WTC11 (cell line): ENCODE measurements at regions of chr15 and their contacts with region 1.

Region 1: GRCh38 chr15:27059610-27060202 is 88.7 kb downstream of the GABRG3 start:
- DNase-seq: peak; percentile 72
- ATAC-seq: peak; percentile 95
- H3K4me3 Mint-ChIP-seq: no peak overlapping the region
- H3K27ac Mint-ChIP-seq: no peak overlapping the region
- H3K4me1 Mint-ChIP-seq: no peaks in the 10 kb centered on the region
- H3K27me3 Mint-ChIP-seq: no peaks in the 10 kb centered on the region
- CTCF ChIP-seq: peak; percentile 59; the same call in 1 of the 2 replicates

Region 2: DNA sequence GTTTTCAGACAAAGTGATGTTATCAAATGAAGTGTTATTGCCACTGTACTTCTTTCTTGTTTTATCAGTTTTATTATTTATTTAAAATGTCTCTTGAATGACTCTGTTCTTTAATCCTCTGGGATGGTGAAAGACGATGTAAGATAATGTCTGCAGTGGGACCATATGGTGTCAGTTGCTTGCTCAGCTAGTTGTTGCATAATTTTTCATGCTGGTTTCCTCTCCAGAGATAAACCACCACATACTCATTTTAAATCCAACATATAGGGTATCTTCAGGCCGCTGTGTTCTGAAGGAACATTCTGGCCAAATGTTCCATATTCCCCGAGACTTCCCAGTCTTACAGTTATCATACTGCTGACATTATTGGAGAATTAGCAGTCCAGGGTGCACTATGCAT is 12.8 kb before region 1 on chr15:
- CTCF ChIA-PET with region 1: interaction called, 27 read pairs
- POLR2A ChIA-PET with region 1: no interaction called
- DNase-seq: no peak
- ATAC-seq: no peak
- H3K4me3 Mint-ChIP-seq: no peak overlapping the region
- H3K27ac Mint-ChIP-seq: no peak overlapping the region
- H3K4me1 Mint-ChIP-seq: no peaks in the 10 kb centered on the region
- H3K27me3 Mint-ChIP-seq: no peaks in the 10 kb centered on the region
- CTCF ChIP-seq: no peak

Region 3: GRCh38 chr15:27070841-27071240 is 11.1 kb after region 1 on chr15:
- CTCF ChIA-PET with region 1: interaction called, 35 read pairs
- POLR2A ChIA-PET with region 1: no interaction called
- DNase-seq: no peak
- ATAC-seq: peak; percentile 48
- H3K4me3 Mint-ChIP-seq: no peak overlapping the region
- H3K27ac Mint-ChIP-seq: no peak overlapping the region
- H3K4me1 Mint-ChIP-seq: peaks cover 19% of the 10 kb centered on the region
- H3K27me3 Mint-ChIP-seq: no peaks in the 10 kb centered on the region
- CTCF ChIP-seq: no peak

Region 4: GRCh38 chr15:27082526-27082925 is 22.8 kb after region 1 on chr15:
- CTCF ChIA-PET with region 1: interaction called, 12 read pairs
- POLR2A ChIA-PET with region 1: no interaction called
- DNase-seq: no peak
- ATAC-seq: no peak
- H3K4me3 Mint-ChIP-seq: no peak overlapping the region
- H3K27ac Mint-ChIP-seq: no peak overlapping the region
- H3K4me1 Mint-ChIP-seq: peaks cover 15% of the 10 kb centered on the region
- H3K27me3 Mint-ChIP-seq: no peaks in the 10 kb centered on the region
- CTCF ChIP-seq: no peak

Region 5: DNA sequence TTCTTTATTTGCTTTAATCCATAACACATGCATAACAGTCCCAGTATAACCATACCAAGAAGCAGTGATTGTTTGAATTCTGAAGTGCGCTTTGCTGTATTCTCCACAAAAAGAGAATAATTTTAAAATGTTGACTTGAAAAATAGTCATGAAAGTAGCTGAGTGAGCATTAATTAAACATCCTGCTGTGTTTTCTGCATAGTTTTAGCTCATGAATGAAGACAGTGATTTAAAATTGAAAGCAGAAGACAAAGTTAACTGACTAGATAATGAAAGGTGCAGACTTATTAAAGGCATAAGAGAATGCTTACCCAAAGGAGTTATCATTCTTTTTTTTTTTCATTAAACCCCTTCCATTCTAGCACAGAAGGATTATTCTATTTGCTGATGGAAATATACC is 54.8 kb after region 1 on chr15:
- CTCF ChIA-PET with region 1: interaction called, 11 read pairs
- POLR2A ChIA-PET with region 1: no interaction called
- DNase-seq: no peak
- ATAC-seq: no peak
- H3K4me3 Mint-ChIP-seq: no peak overlapping the region
- H3K27ac Mint-ChIP-seq: no peak overlapping the region
- H3K4me1 Mint-ChIP-seq: peaks cover 22% of the 10 kb centered on the region
- H3K27me3 Mint-ChIP-seq: no peaks in the 10 kb centered on the region
- CTCF ChIP-seq: no peak

Region 6: GRCh38 chr15:27126449-27126848 is 66.7 kb after region 1 on chr15:
- CTCF ChIA-PET with region 1: no interaction called
- POLR2A ChIA-PET with region 1: no interaction called
- DNase-seq: no peak
- ATAC-seq: no peak
- H3K4me3 Mint-ChIP-seq: no peak overlapping the region
- H3K27ac Mint-ChIP-seq: no peak overlapping the region
- H3K4me1 Mint-ChIP-seq: peaks cover 7% of the 10 kb centered on the region
- H3K27me3 Mint-ChIP-seq: no peaks in the 10 kb centered on the region
- CTCF ChIP-seq: no peak

Region 7: GRCh38 chr15:27939246-27939645 is 879.5 kb after region 1 on chr15:
- CTCF ChIA-PET with region 1: no interaction called
- POLR2A ChIA-PET with region 1: no interaction called
- DNase-seq: no peak
- ATAC-seq: no peak
- H3K4me3 Mint-ChIP-seq: no peak overlapping the region
- H3K27ac Mint-ChIP-seq: no peak overlapping the region
- H3K4me1 Mint-ChIP-seq: peaks cover 28% of the 10 kb centered on the region
- H3K27me3 Mint-ChIP-seq: no peaks in the 10 kb centered on the region
- CTCF ChIP-seq: no peak